ENCODE measurements at regions of chr4 and their contacts with region 1.

Region 1: DNA sequence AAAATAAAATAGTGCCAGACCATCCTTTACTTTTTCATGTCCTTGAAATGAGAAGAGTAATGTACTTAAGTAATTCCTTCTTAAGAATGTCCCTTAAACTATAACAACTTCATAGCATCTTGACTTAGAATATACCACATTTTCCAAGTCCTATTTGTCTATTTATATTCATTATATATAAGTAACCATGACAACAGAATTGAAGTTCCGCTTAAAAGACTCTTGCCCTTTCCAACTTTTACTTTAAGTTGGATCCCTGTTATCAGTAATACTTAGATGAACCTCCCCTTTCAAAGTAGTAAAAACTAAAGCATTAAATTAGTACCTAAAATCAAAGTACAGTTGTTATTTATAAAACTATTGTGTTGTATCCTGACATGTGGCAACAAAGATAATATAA is 17.3 kb downstream of the SLC25A4 start:
- DNase-seq: no peak
- H3K4me3 ChIP-seq: no peak overlapping the region
- CTCF ChIP-seq: no peak

Region 2: GRCh38 chr4:185108669-185109068 is 51.7 kb before region 1 on chr4:
- in situ Hi-C with region 1: loop called (anchors 5 kb)
- DNase-seq: no peak
- H3K4me3 ChIP-seq: no peak overlapping the region
- CTCF ChIP-seq: no peak